ENCODE measurements at regions of chr16 and their contacts with region 1.

Region 1: DNA sequence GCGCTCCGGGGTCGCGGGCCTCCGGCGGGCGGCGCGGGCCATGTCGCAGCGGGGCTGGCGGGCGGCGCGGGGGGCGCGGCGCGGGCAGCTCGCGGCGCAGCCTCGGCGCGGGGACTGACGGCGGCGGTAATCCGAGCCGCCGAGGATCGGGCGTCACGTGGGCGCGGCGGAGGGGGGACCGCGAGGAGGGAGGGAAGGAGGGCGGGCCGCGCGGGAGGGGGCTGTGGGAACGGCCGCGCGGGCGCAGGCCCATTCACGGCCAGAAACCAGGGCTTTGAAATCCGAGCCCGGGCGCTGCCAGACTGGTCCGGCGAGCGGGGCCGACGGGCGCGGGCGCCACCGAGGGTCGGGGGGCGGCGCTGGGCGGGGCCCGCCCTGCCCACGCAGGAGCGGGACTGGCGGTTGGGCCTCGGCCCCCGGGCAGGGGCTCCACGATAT is at the start of gene MTSS2:
- DNase-seq: peak; percentile 88
- H3K27ac ChIP-seq: peak within 1 kb of the TSS; percentile 100
- CTCF ChIP-seq: no peak

Region 2: GRCh38 chr16:70715055-70715858 is 29.3 kb after region 1 on chr16:
- CTCF ChIA-PET with region 1: interaction called, 11 read pairs
- POLR2A ChIA-PET with region 1: interaction called, 3 read pairs
- DNase-seq: peak; percentile 98
- H3K27ac ChIP-seq: peak overlapping the region; percentile 100
- CTCF ChIP-seq: no peak; the same call in 1 of the 2 replicates

Region 3: DNA sequence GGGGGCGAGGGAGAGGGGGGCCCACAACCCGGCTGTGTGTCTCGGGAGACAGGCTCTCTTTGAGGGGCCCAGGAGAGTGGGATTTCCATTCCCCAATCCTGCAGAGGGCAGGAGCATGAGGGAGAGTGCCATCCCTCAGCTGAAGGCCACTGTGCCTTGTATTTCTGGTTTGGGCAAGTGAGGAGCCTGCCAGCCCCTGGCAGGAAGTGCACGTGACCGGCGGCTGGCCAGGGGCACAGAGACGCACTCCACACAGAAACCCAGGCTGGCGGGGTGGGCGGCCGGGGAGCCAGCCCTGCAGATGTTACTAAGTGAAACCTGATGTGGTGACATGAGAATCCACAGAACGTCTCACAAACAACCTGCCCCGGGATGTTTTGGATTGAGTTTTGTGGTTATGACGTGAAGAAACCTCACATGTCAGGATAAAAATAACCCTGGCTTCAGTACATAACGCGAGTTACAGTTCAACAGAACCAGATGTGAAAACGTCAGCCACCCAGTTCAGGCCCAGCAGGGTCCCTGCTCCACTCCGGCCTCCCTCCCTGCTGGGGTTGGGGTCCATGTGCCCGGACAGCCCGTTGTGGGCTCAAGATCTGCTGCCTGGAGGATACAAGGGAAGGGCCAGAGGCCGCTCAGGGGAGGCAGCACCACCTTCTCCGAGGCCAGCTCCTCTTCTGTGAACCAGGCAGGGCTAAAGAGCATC is 51.6 kb after region 1 on chr16:
- CTCF ChIA-PET with region 1: interaction called, 19 read pairs
- POLR2A ChIA-PET with region 1: interaction called, 3 read pairs
- DNase-seq: no peak
- H3K27ac ChIP-seq: peak overlapping the region; percentile 70
- CTCF ChIP-seq: no peak

Region 4: DNA sequence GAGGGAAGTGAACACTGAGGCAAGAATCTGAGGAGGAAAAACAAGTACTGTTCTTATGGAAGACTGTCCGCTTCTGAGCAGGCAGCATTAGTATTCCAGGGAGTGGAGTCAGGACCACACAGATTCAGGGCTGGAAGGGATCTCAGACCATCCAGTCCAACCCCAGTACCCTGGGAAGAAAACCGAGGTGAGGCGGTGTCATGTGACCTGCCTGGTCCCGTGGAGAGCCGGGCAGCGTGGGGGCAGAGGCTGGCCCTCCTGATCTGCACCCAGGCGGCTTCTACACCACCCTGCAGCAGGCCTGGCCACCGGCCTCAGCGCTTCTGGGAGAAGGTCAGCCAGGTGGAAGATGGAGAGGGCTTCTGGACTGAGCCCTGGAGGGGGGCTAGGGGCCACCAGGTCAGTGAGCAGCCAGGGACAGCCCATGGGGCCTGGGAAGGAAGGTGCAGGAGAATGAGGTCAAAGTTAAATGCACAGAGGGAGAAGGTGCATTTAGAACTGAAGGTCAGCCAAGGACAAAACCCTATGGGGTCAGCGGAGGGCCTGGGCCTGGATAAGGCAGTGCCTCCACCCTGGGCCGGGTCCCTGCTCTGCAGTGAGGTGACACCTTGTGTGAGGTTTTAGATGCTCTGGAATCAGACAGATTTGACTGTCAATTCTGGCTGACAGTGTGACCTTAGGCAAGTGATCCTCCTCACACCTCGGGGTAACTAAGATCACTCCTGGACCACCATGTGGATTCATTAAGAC is 69.1 kb after region 1 on chr16:
- CTCF ChIA-PET with region 1: no interaction called
- POLR2A ChIA-PET with region 1: no interaction called
- DNase-seq: no peak
- H3K27ac ChIP-seq: peak overlapping the region; percentile 95
- CTCF ChIP-seq: no peak

Region 5: GRCh38 chr16:70770626-70771552 is 84.9 kb after region 1 on chr16:
- CTCF ChIA-PET with region 1: interaction called, 19 read pairs
- POLR2A ChIA-PET with region 1: interaction called, 5 read pairs
- DNase-seq: peak; percentile 69
- H3K27ac ChIP-seq: peak overlapping the region; percentile 87
- CTCF ChIP-seq: peak; percentile 96

Measured in RWPE1 (cell line).